CD8-positive, alpha-beta T cell (primary cell): ENCODE measurements at regions of chr4 and their contacts with region 1.

Region 1: GRCh38 chr4:146506272-146506671 is 15.5 kb downstream of the SLC10A7 start:
- DNase-seq: no peak
- ATAC-seq: no peak
- H3K4me3 ChIP-seq: no peak overlapping the region
- H3K4me3 Mint-ChIP-seq: no peak overlapping the region
- H3K27ac ChIP-seq: no peak overlapping the region
- H3K27ac Mint-ChIP-seq: no peak overlapping the region
- H3K4me1 ChIP-seq: no peaks in the 10 kb centered on the region
- H3K4me1 Mint-ChIP-seq: no peaks in the 10 kb centered on the region
- H3K27me3 ChIP-seq: no peaks in the 10 kb centered on the region
- H3K27me3 Mint-ChIP-seq: no peaks in the 10 kb centered on the region
- CTCF ChIP-seq: no peak

Region 2: GRCh38 chr4:145785391-145786008 is 720.8 kb before region 1 on chr4:
- CTCF ChIA-PET with region 1: no interaction called
- POLR2A ChIA-PET with region 1: no interaction called
- intact Hi-C with region 1: loop called in 1 of 2 experiments (anchors 10 kb)
- DNase-seq: no peak
- ATAC-seq: no peak
- H3K4me3 ChIP-seq: no peak overlapping the region
- H3K4me3 Mint-ChIP-seq: no peak overlapping the region
- H3K27ac ChIP-seq: no peak overlapping the region
- H3K27ac Mint-ChIP-seq: no peak overlapping the region
- H3K4me1 ChIP-seq: no peaks in the 10 kb centered on the region
- H3K4me1 Mint-ChIP-seq: peaks cover 2% of the 10 kb centered on the region
- H3K27me3 ChIP-seq: no peaks in the 10 kb centered on the region
- H3K27me3 Mint-ChIP-seq: no peaks in the 10 kb centered on the region
- CTCF ChIP-seq: no peak

Region 3: GRCh38 chr4:146834263-146835034 is 328.2 kb after region 1 on chr4:
- CTCF ChIA-PET with region 1: no interaction called
- POLR2A ChIA-PET with region 1: no interaction called
- intact Hi-C with region 1: no loop called
- DNase-seq: no peak
- ATAC-seq: no peak
- H3K4me3 ChIP-seq: no peak overlapping the region
- H3K4me3 Mint-ChIP-seq: no peak overlapping the region
- H3K27ac ChIP-seq: no peak overlapping the region
- H3K27ac Mint-ChIP-seq: no peak overlapping the region
- H3K4me1 ChIP-seq: no peaks in the 10 kb centered on the region
- H3K4me1 Mint-ChIP-seq: no peaks in the 10 kb centered on the region
- H3K27me3 ChIP-seq: no peaks in the 10 kb centered on the region
- H3K27me3 Mint-ChIP-seq: no peaks in the 10 kb centered on the region
- CTCF ChIP-seq: no peak